IMR-90 (cell line): ENCODE measurements at regions of chr20 and their contacts with region 1.

Region 1: DNA sequence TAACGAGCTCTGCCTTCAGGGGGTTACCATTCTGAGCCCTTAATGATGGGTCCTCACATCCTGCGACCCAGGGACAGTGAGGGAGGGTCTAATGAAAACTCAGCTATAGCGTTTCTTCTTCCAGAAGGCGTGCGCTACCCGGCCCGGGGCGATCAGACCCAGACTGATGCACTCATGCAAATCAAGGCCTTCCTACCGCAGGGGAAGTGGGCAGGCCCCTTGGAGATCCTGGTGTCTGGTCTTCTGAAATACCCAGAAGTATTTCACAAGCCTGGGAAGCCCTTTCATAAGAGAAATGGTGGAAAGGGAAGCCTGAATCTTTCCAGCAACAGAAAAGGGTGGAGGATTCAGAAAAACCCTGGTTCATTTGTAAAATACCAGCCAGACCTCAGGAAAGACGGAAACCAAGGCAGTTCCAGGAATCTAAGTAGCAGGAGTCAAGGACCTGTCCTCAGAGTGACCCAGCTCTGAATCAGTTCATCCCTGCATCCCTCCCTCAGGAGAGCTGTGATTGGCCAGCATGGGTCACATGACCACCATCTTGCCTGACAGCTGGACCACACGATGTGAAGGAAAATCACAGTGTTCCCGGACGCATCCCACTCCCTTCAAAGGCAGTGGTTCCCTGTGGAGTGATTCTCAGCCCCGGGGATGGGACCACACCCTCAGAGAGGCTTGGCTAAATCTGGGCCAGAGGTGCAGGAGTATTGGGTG is 12.7 kb downstream of the BFSP1 start:
- DNase-seq: no peak
- ATAC-seq: no peak
- H3K4me3 ChIP-seq: no peak overlapping the region
- H3K27ac ChIP-seq: no peak overlapping the region
- H3K4me1 ChIP-seq: no peaks in the 10 kb centered on the region
- H3K27me3 ChIP-seq: peaks cover 14% of the 10 kb centered on the region
- CTCF ChIP-seq: no peak
- POLR2A ChIP-seq: no peak
- RAD21 ChIP-seq: no peak

Region 2: GRCh38 chr20:17925141-17925939 is 406.8 kb after region 1 on chr20:
- CTCF ChIA-PET with region 1: no interaction called
- POLR2A ChIA-PET with region 1: no interaction called
- dilution Hi-C with region 1: no loop called
- in situ Hi-C with region 1: loop called (anchors 10 kb)
- intact Hi-C with region 1: no loop called
- DNase-seq: peak; percentile 28
- ATAC-seq: no peak; the same call in 1 of the 2 replicates
- H3K4me3 ChIP-seq: no peak overlapping the region
- H3K27ac ChIP-seq: no peak overlapping the region
- H3K4me1 ChIP-seq: peaks cover 4% of the 10 kb centered on the region; the same call in 1 of the 2 replicates
- H3K27me3 ChIP-seq: peaks cover 11% of the 10 kb centered on the region
- CTCF ChIP-seq: no peak
- POLR2A ChIP-seq: no peak
- RAD21 ChIP-seq: no peak

Region 3: GRCh38 chr20:17995967-17996819 is 477.7 kb after region 1 on chr20:
- CTCF ChIA-PET with region 1: no interaction called
- POLR2A ChIA-PET with region 1: no interaction called
- dilution Hi-C with region 1: no loop called
- in situ Hi-C with region 1: loop called (anchors 10 kb)
- intact Hi-C with region 1: no loop called
- DNase-seq: peak; percentile 74
- ATAC-seq: peak; percentile 91
- H3K4me3 ChIP-seq: no peak overlapping the region
- H3K27ac ChIP-seq: no peak overlapping the region
- H3K4me1 ChIP-seq: no peaks in the 10 kb centered on the region
- H3K27me3 ChIP-seq: peaks cover 4% of the 10 kb centered on the region; the same call in 1 of the 2 replicates
- CTCF ChIP-seq: peak; percentile 99
- POLR2A ChIP-seq: 0 out of 2 replicates have a peak, but pooled peaks have one; percentile 27
- RAD21 ChIP-seq: peak; percentile 94